Calu3 (cell line): ENCODE measurements at regions of chr1 and their contacts with region 1.

Region 1: DNA sequence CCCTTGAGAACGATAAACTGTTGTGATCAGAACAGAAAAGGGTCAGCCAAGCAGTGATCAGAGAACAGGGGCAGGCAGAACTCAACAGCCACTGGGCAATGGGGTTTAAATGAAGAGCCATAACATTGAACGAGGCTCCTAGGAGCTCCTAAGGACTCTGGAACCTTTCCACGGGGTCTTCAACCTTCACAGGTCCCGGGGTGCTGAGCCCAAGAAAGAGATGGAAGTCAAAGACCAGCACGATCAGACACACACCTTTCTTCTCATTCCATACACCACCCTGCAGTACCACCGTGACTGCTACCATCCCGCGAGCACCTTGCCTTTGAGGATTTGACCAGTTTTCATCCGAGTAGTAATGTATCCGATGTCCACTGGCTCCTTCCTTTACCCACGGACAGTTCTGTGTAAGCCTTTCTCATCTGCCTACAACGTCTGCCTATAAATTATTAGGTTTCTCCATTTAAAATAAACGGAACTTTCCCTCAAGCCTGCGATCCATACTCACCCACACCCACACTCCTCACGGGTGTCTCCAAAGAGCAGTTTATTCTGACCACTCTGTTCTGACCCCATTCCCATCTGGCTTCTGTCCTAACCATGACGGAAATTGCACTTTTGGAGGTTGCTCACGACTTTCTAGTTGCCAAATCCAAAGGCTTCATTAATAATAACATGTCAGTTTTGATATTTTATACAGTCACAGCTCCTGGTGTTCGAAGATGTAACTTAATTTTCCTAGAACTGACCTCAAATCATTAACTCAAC is 16.8 kb upstream of the HHAT start:
- DNase-seq: no peak
- H3K4me3 Mint-ChIP-seq: peak overlapping the region; percentile 87
- H3K27ac Mint-ChIP-seq: no peak overlapping the region
- H3K4me1 Mint-ChIP-seq: peaks cover 31% of the 10 kb centered on the region
- H3K27me3 Mint-ChIP-seq: no peaks in the 10 kb centered on the region
- CTCF ChIP-seq: no peak

Region 2: GRCh38 chr1:209860293-209860881 is 451.5 kb before region 1 on chr1:
- CTCF ChIA-PET with region 1: no interaction called
- intact Hi-C with region 1: loop called (anchors 5 kb)
- DNase-seq: peak; percentile 87
- H3K4me3 Mint-ChIP-seq: no peak overlapping the region
- H3K27ac Mint-ChIP-seq: no peak overlapping the region
- H3K4me1 Mint-ChIP-seq: peaks cover 42% of the 10 kb centered on the region
- H3K27me3 Mint-ChIP-seq: no peaks in the 10 kb centered on the region
- CTCF ChIP-seq: peak; percentile 86

Region 3: DNA sequence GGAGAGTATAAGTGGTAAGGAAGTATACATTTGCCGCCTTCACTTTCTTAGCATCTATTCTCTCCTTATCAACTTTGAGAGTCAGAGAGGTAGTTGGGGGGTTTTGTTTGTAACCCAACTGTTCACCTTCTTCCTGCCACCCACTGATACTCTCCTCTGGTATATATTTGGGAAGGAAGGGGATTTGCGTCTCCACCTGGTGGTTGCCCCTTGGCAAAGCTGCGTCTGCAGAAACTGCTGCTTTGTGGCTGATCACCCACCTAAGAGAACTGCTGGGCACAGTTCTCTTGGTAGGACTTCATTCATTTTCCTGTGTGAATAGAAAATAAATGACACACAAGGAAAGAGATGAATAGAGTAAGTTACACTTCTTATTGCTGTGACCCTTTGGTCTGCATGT is 286.9 kb before region 1 on chr1:
- CTCF ChIA-PET with region 1: interaction called, 5 read pairs
- intact Hi-C with region 1: loop called (anchors 2 kb)
- DNase-seq: peak; percentile 4
- H3K4me3 Mint-ChIP-seq: no peak overlapping the region
- H3K27ac Mint-ChIP-seq: no peak overlapping the region
- H3K4me1 Mint-ChIP-seq: no peaks in the 10 kb centered on the region
- H3K27me3 Mint-ChIP-seq: peaks cover under 1% of the 10 kb centered on the region
- CTCF ChIP-seq: no peak

Region 4: GRCh38 chr1:210143465-210144062 is 168.3 kb before region 1 on chr1:
- CTCF ChIA-PET with region 1: interaction called, 3 read pairs
- intact Hi-C with region 1: loop called (anchors 1 kb)
- DNase-seq: peak; percentile 84
- H3K4me3 Mint-ChIP-seq: no peak overlapping the region
- H3K27ac Mint-ChIP-seq: no peak overlapping the region
- H3K4me1 Mint-ChIP-seq: no peaks in the 10 kb centered on the region
- H3K27me3 Mint-ChIP-seq: no peaks in the 10 kb centered on the region
- CTCF ChIP-seq: no peak

Region 5: DNA sequence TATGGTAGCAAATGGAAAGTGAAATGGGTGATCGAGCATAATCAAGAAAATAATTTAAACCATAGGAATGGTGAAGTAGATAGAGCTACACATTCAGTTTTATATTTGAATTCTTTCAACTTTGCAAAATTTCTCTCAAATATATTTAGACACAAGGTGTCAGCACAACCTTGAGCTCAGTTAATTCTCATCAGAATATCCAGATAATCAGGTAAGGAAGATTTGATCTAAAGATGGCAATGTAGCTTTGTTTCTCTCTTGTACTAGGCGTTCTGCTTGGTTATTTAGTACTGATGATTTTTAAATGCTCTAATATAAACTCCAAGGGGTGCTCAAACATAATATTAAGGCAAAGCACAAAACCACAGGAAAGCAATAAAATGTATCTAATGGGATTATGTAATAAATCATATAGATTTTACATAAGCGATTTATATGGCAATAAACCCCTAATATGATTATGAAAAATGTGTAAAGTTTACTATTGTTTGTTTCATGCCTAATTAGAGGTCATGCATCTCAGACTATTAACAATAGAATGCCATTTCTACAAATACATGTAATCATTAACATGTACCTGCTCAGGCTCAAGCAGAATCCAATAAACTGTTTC is 111.7 kb before region 1 on chr1:
- CTCF ChIA-PET with region 1: interaction called, 8 read pairs
- intact Hi-C with region 1: loop called (anchors 1 kb)
- DNase-seq: no peak
- H3K4me3 Mint-ChIP-seq: no peak overlapping the region
- H3K27ac Mint-ChIP-seq: no peak overlapping the region
- H3K4me1 Mint-ChIP-seq: peaks cover 18% of the 10 kb centered on the region
- H3K27me3 Mint-ChIP-seq: no peaks in the 10 kb centered on the region
- CTCF ChIP-seq: no peak

Region 6: DNA sequence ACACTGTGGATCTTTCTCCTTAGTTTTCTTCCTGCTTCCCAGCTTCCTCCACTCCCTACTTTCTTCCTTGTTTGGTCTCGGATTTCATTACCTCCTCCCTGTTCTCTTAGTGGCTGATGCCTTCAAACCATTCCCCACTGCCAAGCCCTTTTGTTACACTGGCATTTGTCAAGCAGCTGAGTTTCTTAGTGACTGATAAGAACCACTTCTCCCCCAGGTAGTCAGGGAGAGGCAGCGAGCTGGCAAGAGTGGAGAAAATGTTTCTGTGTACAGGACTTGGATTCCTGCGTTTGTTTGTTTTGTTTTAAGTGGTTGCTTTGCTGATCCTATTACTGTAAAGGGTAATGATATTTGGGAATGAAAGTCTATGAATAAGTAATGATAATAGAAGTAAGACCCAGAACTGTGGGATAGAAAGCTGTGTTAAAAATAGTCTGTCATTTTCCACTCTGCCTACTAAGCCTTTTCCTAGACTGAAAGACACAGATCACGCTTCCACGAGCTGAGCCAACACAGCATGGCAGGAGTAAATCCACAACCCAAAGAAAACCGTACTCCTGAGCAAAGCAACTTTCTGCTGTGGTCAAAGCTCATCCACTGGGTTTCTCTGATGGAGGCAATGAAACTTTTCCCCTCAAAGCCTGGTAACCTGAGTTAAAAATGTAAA is 89.4 kb before region 1 on chr1:
- CTCF ChIA-PET with region 1: no interaction called
- intact Hi-C with region 1: no loop called
- DNase-seq: peak; percentile 35
- H3K4me3 Mint-ChIP-seq: peak overlapping the region; percentile 12
- H3K27ac Mint-ChIP-seq: no peak overlapping the region
- H3K4me1 Mint-ChIP-seq: peaks cover 22% of the 10 kb centered on the region
- H3K27me3 Mint-ChIP-seq: no peaks in the 10 kb centered on the region
- CTCF ChIP-seq: no peak

Region 7: GRCh38 chr1:210233216-210234020 is 78.5 kb before region 1 on chr1:
- CTCF ChIA-PET with region 1: interaction called, 4 read pairs
- intact Hi-C with region 1: loop called (anchors 5 kb)
- DNase-seq: peak; percentile 69
- H3K4me3 Mint-ChIP-seq: peak overlapping the region; percentile 74
- H3K27ac Mint-ChIP-seq: no peak overlapping the region
- H3K4me1 Mint-ChIP-seq: peaks cover 31% of the 10 kb centered on the region
- H3K27me3 Mint-ChIP-seq: no peaks in the 10 kb centered on the region
- CTCF ChIP-seq: no peak